Ovary (tissue), 10 donors: ENCODE measurements at regions of chr16 and their contacts with region 1.

Region 1: GRCh38 chr16:69754469-69755310 is at the start of gene NOB1:
- DNase-seq: peak; percentile 95 to 98 (median 98)
- H3K4me3 ChIP-seq: peak within 1 kb of the TSS; percentile 95
- H3K27ac ChIP-seq: peak within 1 kb of the TSS in 1 of 2 donors; percentile 27
- H3K4me1 ChIP-seq: peaks cover 6% of the 10 kb centered on the region
- H3K27me3 ChIP-seq: no peaks in the 10 kb centered on the region
- CTCF ChIP-seq: peak; percentile 95 to 100 (median 100)
- EP300 ChIP-seq: no peak
- POLR2A ChIP-seq: peak; percentile 50
- total RNA-seq, gene NOB1: 38.2 to 78.8 (median 62.1) TPM

Region 2: GRCh38 chr16:69301861-69302260 is 452.8 kb before region 1 on chr16:
- intact Hi-C with region 1: no loop called
- DNase-seq: no peak
- H3K4me3 ChIP-seq: no peak overlapping the region
- H3K27ac ChIP-seq: no peak overlapping the region
- H3K4me1 ChIP-seq: no peaks in the 10 kb centered on the region
- H3K27me3 ChIP-seq: no peaks in the 10 kb centered on the region
- CTCF ChIP-seq: no peak
- EP300 ChIP-seq: no peak
- POLR2A ChIP-seq: no peak

Region 3: DNA sequence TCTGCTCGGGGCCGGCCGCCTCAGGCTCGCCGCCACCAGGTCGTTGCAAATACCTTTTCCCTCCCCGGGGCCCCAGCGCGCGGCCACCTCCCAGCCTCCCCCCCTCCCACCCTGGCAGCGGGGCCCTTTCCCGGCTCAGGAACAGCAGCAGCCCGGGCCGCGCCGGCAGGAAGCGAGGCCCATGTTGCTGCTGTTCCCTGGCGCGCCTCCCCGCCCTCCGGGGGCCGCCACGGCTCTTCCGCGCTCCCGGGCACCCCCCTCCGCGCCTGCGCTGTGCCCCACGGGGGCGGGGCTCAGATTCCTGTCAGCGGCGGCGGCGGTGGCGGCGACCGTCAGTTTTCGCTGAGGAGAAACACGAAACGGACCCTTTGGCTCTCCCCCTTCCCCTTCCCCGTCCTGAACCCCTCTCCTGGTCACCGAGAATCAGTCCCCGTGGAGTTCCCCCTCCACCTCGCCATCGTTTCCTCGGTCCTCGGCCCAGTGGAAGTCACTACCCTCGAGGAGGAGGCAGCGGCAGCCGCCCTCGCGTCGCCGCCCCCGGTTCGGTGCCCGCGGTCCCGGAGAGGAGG is 188.9 kb before region 1 on chr16 and contains the start of gene NFAT5:
- intact Hi-C with region 1: loop called in 1 of 4 experiments (anchors 10 kb)
- DNase-seq: peak; percentile 87 to 98 (median 89)
- H3K4me3 ChIP-seq: peak within 1 kb of the TSS; percentile 96
- H3K27ac ChIP-seq: peak within 1 kb of the TSS; percentile 96 to 100
- H3K4me1 ChIP-seq: peaks cover 6% of the 10 kb centered on the region
- H3K27me3 ChIP-seq: no peaks in the 10 kb centered on the region
- CTCF ChIP-seq: no peak
- EP300 ChIP-seq: no peak
- POLR2A ChIP-seq: peak; percentile 94
- total RNA-seq, gene NFAT5: 33.5 to 47.9 (median 38.1) TPM

Region 4: DNA sequence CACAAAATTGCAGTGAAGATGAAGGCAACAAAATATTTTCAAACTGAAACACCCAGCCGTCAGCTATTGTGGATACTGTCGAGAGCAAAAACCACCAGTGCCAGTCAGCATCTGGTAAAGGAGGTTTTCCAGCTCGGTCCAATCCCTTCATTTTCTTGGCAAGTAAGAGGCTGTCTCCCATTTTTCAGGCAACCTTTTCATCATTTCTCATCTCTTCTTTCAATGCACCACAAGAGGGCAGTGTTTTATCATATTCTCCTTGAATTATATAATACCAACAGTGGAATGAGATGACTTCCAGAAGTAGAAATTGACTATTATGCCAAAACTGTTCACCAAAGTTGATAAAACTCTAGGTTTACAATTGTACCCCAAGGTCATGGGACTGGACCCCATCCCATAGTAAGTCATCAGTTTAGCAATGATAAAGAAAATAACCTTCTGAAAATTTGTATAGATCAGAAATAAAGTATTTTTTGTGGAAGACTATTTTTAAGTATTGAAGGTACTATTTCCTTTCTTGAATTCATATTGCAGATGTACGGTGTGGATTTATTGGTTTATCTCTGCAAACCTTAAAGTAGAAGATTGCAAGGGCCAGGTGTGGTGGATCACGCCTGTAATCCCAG is 45.1 kb before region 1 on chr16:
- intact Hi-C with region 1: loop called (anchors 2 to 5 kb)
- DNase-seq: no peak
- H3K4me3 ChIP-seq: no peak overlapping the region
- H3K27ac ChIP-seq: peak overlapping the region in 1 of 2 donors; percentile 15
- H3K4me1 ChIP-seq: no peaks in the 10 kb centered on the region
- H3K27me3 ChIP-seq: no peaks in the 10 kb centered on the region
- CTCF ChIP-seq: peak; percentile 34 to 80 (median 78)
- EP300 ChIP-seq: no peak
- POLR2A ChIP-seq: no peak

Region 5: DNA sequence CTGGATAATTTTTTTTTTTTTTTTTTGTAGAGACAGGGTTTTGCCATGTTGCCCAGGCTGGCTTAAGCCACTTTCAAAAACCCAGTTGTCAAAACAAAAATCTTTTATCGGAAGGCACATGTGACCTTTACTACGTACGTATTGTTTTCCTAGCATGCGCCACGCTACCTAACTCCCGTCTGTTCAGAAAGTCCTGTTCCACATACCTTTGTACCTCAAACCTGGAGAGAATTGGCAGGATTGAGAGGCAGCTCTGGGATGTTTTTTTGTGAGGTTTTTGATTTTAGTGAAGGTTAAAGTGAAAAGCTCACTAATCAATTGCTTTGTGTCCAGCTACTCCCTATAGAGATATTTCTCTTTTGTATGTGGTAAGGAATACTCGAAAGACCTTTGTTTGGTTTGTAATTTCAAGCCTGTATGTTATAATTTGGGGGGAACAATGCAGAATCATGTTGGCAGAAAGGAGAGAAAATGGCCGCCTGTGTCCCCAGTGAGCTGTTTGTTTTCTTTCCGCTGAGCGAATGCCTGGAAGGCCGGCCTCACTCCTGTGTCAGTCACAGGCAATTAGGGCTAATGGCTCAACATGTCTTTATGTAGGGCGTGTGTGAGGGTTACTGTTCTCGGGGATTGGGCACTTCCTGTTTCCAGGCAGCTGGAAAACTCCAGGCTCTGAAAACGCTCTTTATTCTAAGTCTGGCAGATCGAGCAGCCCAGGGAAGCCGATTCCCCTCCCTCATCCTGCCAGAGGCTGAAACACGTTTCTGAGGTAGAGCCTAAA is 135.6 kb after region 1 on chr16:
- intact Hi-C with region 1: no loop called
- DNase-seq: peak; percentile 19 to 58 (median 39)
- H3K4me3 ChIP-seq: no peak overlapping the region
- H3K27ac ChIP-seq: peak overlapping the region; percentile 32 to 49
- H3K4me1 ChIP-seq: peaks cover 5% of the 10 kb centered on the region
- H3K27me3 ChIP-seq: no peaks in the 10 kb centered on the region
- CTCF ChIP-seq: no peak
- EP300 ChIP-seq: no peak
- POLR2A ChIP-seq: no peak